ENCODE measurements at regions of chr6 and their contacts with region 1.

Region 1: GRCh38 chr6:134288538-134289203 is 29.2 kb downstream of the SGK1 start:
- DNase-seq: no peak
- H3K4me3 Mint-ChIP-seq: peak overlapping the region; percentile 72
- H3K27ac Mint-ChIP-seq: peak overlapping the region; percentile 96
- H3K4me1 Mint-ChIP-seq: peaks cover 38% of the 10 kb centered on the region
- H3K27me3 Mint-ChIP-seq: peaks cover 2% of the 10 kb centered on the region

Region 2: DNA sequence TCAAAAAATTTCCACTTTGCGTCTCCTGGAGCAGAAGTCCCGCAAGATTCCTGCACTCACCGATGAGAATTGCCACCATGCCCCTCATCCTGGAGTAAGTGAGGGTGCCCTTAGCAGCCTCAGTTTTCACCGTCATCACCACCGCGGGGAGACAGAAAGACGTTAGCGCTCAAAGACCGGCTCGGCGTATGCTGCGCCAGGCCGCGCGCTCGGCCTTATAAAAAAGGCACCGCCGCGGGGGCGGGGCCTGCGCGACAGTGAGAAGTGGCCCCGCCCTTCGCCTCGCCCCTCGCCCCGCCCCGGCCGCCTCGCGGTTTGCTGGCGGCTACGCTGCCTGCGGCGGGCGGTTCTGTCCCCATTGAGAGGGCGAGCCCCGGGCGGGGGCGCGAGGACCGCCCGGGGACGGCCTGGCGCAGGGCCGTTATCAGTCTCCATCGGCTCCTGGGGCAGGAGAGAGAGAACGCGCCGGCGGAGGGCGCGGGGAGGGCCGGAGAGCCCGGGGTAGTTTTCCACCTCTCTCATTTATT is 113.9 kb before region 1 on chr6:
- intact Hi-C with region 1: loop called (anchors 1 kb)
- DNase-seq: peak; percentile 89
- H3K4me3 Mint-ChIP-seq: peak overlapping the region; percentile 96
- H3K27ac Mint-ChIP-seq: peak overlapping the region; percentile 98
- H3K4me1 Mint-ChIP-seq: peaks cover 78% of the 10 kb centered on the region
- H3K27me3 Mint-ChIP-seq: no peaks in the 10 kb centered on the region

Region 3: GRCh38 chr6:134199848-134200606 is 88.6 kb before region 1 on chr6:
- intact Hi-C with region 1: no loop called
- DNase-seq: no peak
- H3K4me3 Mint-ChIP-seq: no peak overlapping the region
- H3K27ac Mint-ChIP-seq: peak overlapping the region; percentile 23
- H3K4me1 Mint-ChIP-seq: peaks cover 23% of the 10 kb centered on the region
- H3K27me3 Mint-ChIP-seq: peaks cover 2% of the 10 kb centered on the region

Region 4: DNA sequence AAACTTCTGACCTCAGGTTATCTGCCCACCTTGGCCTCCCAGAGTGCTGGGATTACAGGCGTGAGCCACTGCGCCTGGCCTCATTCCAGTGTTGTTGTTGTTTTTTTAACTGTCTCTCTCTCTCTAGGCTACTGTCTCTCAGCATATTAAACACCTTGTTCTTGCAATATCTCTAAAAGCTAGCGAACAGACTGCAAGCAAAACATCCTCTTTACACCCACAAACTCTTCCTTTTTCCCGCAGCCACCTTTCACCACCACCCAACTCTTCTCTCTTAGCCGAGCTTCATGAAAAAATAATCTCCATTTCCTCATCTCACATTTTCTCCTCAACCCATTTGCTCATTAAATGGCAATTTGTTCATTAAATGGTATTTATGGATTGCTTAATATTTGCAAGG is 16.3 kb before region 1 on chr6:
- intact Hi-C with region 1: loop called (anchors 2 kb)
- DNase-seq: no peak
- H3K4me3 Mint-ChIP-seq: peak overlapping the region; percentile 3
- H3K27ac Mint-ChIP-seq: peak overlapping the region; percentile 41
- H3K4me1 Mint-ChIP-seq: peaks cover 40% of the 10 kb centered on the region
- H3K27me3 Mint-ChIP-seq: peaks cover 2% of the 10 kb centered on the region

Region 5: GRCh38 chr6:134373282-134373922 is 84.7 kb after region 1 on chr6:
- intact Hi-C with region 1: loop called (anchors 1 kb)
- DNase-seq: no peak
- H3K4me3 Mint-ChIP-seq: peak overlapping the region; percentile 47
- H3K27ac Mint-ChIP-seq: peak overlapping the region; percentile 57
- H3K4me1 Mint-ChIP-seq: peaks cover 46% of the 10 kb centered on the region
- H3K27me3 Mint-ChIP-seq: no peaks in the 10 kb centered on the region

Region 6: DNA sequence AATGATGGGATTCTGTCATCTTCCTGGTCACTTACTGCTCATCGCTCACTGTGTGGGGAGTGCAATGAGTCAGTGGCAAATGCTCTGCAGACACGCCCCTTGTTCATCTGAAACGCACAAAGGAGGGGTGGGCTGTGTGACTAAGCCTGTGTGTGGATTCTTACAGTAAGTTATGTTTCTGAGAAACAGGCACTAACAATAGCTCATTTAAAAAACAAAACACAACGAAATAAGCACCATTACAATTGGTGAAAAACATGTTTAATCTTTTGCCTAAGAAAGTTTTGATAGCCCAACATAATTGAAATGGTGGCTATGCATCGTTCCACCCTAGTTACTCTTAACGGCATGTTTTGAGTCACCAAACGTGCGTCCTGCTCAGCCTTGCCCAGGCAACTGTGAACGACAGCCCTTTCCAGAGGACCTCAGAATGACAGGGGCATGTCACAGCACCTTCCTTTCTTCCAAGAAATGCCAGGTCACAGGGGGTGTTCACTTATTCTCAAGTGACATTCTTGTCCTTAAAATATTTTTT is 147.7 kb after region 1 on chr6:
- intact Hi-C with region 1: loop called (anchors 1 kb)
- DNase-seq: peak; percentile 74
- H3K4me3 Mint-ChIP-seq: peak overlapping the region; percentile 55
- H3K27ac Mint-ChIP-seq: peak overlapping the region; percentile 99
- H3K4me1 Mint-ChIP-seq: peaks cover 41% of the 10 kb centered on the region
- H3K27me3 Mint-ChIP-seq: no peaks in the 10 kb centered on the region

Region 7: GRCh38 chr6:135054569-135055498 is 766.2 kb after region 1 on chr6 and contains the start of gene HBS1L:
- intact Hi-C with region 1: loop called (anchors 2 kb)
- DNase-seq: peak; percentile 99
- H3K4me3 Mint-ChIP-seq: peak within 1 kb of the TSS; percentile 94
- H3K27ac Mint-ChIP-seq: peak within 1 kb of the TSS; percentile 96
- H3K4me1 Mint-ChIP-seq: peaks cover 42% of the 10 kb centered on the region
- H3K27me3 Mint-ChIP-seq: peaks cover 2% of the 10 kb centered on the region
- total RNA-seq, gene HBS1L: 104 and 115 TPM in 2 replicates

Region 8: GRCh38 chr6:135162678-135163439 is 874.2 kb after region 1 on chr6:
- intact Hi-C with region 1: loop called (anchors 5 kb)
- DNase-seq: no peak
- H3K4me3 Mint-ChIP-seq: peak overlapping the region; percentile 53
- H3K27ac Mint-ChIP-seq: peak overlapping the region; percentile 87
- H3K4me1 Mint-ChIP-seq: peaks cover 83% of the 10 kb centered on the region
- H3K27me3 Mint-ChIP-seq: no peaks in the 10 kb centered on the region

Measured in activated T-helper 1 cell treated with anti-CD3 and anti-CD28 coated beads, Interleukin-12 subunit alpha, Interleukin-12 subunit beta, Interleukin-2, Interleukin-4 antibody, amounts not matched to agents 30 ng/mL and 10 ng/mL and 1 ng/mL, durations not matched to agents 14 hours and 24 hours and 36 hours (primary cell).